HEK293 (cell line): ENCODE measurements at regions of chr22 and their contacts with region 1.

Region 1: DNA sequence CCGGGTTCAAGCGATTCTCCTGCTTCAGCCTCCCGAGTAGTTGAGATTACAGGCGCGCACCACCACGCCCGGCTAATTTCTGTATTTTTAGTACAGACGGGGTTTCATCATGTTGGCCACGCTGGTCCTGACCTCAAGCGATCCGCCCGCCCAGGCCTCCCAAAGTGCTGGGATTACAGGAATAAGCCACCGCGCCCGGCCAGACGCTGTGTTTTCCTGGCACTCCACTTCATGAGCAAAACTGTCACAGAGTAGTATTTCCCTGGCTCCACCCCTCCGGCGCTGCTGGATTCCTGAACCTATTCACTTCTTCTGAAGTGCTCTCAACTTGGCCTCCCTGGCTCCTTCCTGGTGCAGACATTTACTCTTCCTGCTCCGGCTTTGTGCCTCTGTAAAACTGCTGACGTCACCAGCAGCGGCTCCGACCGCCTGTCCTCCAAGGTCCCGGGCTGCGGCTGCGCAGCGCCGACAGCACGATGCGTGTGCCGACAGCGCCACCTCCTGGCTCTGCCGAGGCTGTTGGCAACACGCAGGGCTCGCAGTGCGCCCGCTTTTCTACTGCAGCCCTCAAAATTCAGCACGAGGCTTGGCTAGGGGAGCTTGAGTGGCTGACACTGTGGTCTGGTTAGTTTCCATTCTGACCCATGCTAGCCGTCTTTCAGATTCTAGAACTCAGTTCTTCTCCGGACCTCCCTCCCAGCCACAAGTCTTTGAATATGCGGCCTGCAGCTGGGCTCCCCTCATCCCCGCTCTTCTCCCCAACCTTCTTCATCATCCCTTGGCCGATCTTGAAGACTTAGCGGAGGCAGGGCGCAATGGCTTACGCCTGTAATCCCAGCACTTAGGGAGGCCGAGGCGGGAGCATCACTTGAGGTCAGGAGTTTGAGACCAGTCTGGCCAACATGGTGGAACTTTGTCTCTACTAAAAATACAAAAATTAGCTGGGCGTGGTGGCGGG is 36.6 kb downstream of the APOL3 start:
- H3K4me3 ChIP-seq: no peak overlapping the region
- H3K27ac ChIP-seq: no peak overlapping the region
- H3K4me1 ChIP-seq: no peaks in the 10 kb centered on the region; the same call in 1 of the 2 replicates
- CTCF ChIP-seq: peak; percentile 99

Region 2: DNA sequence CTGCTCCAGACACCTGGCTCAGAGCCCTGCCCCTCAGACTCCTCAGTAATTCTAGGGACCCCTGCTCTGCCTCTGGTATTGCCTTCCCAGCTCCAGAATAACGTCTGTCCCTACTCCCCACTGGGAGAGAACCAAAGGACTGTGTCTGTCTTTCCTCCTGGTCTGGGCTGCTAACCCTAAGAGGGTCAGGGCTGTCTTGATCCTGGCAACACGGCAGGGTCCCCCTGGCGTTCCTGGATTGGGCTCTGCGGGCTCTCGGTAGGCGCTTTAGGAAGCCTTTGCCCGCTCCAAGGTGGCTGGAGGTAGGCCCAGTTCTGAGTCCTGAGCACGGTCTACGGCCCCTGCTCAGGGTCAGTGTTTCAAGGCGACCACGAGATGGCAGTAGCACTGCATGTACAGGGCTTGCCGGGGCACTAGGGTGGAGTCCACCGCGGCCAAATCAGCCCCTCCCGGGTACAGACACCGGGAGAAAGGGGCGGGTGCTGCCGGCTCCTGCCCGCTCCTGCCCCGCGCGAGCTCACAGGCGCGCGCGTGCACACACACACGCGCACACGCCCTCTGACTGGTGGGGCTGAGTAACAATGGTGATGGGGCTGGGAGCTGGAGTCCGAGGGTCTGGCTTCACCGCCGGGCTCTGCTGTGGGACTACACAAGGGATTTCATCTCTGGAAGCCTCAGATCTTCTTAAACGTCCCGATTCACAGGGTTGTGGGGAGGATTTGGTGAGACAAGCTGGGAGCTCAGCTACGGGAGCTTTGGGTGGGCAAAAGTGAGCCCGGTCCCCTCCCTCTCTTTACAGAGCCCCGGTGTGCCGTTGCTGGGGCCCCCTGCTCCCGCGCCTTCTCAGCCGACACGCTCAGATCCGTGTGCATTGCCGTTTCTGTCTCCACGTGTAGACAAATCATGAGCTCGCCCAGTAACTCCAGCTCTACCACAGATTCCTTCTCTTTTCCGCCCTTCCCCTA is 773.1 kb before region 1 on chr22:
- CTCF ChIA-PET with region 1: interaction called, 10 read pairs
- POLR2A ChIA-PET with region 1: no interaction called
- H3K4me3 ChIP-seq: peak overlapping the region; percentile 46
- H3K27ac ChIP-seq: peak overlapping the region; percentile 10; the same call in 1 of the 2 replicates
- H3K4me1 ChIP-seq: no peaks in the 10 kb centered on the region
- CTCF ChIP-seq: peak; percentile 97

Region 3: GRCh38 chr22:35921777-35922176 is 202.2 kb before region 1 on chr22:
- CTCF ChIA-PET with region 1: interaction called, 11 read pairs
- POLR2A ChIA-PET with region 1: no interaction called
- H3K4me3 ChIP-seq: no peak overlapping the region
- H3K27ac ChIP-seq: no peak overlapping the region
- H3K4me1 ChIP-seq: no peaks in the 10 kb centered on the region
- CTCF ChIP-seq: peak; percentile 69; the same call in 1 of the 2 replicates

Region 4: GRCh38 chr22:36110306-36110881 is 13.6 kb before region 1 on chr22:
- CTCF ChIA-PET with region 1: interaction called, 10 read pairs
- POLR2A ChIA-PET with region 1: no interaction called
- H3K4me3 ChIP-seq: no peak overlapping the region
- H3K27ac ChIP-seq: no peak overlapping the region
- H3K4me1 ChIP-seq: no peaks in the 10 kb centered on the region
- CTCF ChIP-seq: no peak

Region 5: GRCh38 chr22:36180038-36180880 is 56.3 kb after region 1 on chr22:
- CTCF ChIA-PET with region 1: interaction called, 12 read pairs
- POLR2A ChIA-PET with region 1: no interaction called
- H3K4me3 ChIP-seq: no peak overlapping the region
- H3K27ac ChIP-seq: no peak overlapping the region
- H3K4me1 ChIP-seq: no peaks in the 10 kb centered on the region
- CTCF ChIP-seq: no peak